ENCODE measurements at regions of chr4 and their contacts with region 1.

Region 1: GRCh38 chr4:174324725-174325124 is 41.0 kb downstream of the CEP44 start:
- DNase-seq: no peak

Region 2: GRCh38 chr4:174292473-174292872 is 32.3 kb before region 1 on chr4:
- intact Hi-C with region 1: loop called in 1 of 2 experiments (anchors 2 kb)
- DNase-seq: no peak

Region 3: DNA sequence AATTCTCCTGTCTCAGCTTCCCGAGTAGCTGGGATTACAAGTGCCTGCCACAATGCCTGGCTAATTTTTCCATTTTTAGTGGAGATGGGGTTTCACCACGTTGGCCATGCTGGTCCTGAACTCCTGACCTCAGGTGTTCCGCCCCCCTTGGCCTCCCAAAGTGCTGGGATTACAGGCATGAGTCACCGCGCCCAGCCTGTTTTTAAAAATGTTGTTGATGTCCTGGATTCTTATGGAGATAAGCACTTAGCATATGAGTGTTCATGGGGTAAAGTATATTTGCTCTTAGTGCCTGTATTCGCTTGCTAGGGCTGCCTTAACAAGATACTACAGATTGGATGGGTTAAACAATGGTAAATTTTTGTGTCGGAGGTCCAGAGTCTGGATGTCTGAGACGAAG is 50.7 kb after region 1 on chr4:
- intact Hi-C with region 1: no loop called
- DNase-seq: no peak